ENCODE measurements at regions of chr11 and their contacts with region 1.

Region 1: DNA sequence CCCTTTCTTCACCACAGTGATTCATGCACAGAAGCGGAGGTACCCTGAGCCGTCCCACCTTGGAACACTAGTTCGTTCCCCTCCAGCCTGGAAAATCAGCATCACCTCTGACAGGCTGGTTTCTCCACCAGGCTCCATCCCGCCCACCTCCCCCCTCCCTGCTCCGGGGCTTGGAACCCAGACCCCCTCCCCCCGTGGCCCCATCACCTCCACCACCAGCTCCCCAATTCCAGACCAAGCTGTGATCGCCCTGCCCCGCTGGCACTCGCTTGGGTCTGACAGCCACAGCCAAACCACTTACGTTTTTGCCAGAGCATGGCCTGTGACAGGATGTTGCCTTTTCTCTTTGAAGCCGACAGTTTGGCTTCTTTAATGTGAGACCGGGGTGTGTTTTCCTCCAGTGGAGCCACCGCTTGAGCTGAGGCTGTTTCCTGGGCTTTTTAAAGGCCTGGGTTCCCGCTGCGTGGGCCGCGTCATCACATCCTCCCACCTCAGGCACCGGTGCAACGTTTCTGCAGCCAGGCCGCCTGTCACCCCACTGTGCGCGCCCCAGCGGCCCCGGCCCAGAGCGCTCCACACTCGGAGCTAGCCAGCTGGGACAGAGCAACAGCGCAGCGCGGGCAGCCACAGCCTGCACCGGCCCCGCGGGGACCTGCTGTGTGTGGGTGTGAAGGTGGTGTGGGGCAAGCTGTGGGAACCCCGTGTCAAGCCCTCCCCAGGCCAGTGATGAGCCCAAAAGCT is at the start of gene POU2AF1:
- DNase-seq: peak; percentile 69 to 79 (median 71)
- H3K4me3 ChIP-seq: peak within 1 kb of the TSS in 1 of 2 donors; percentile 46
- H3K4me3 Mint-ChIP-seq: peak within 1 kb of the TSS; percentile 77 to 91 (median 87)
- H3K27ac ChIP-seq: peak within 1 kb of the TSS; percentile 27
- H3K27ac Mint-ChIP-seq: peak within 1 kb of the TSS; percentile 86 to 99 (median 94)
- H3K4me1 ChIP-seq: peaks cover 24% of the 10 kb centered on the region
- H3K4me1 Mint-ChIP-seq: peaks cover 14 to 30% (median 24%) of the 10 kb centered on the region in 4 donors
- H3K27me3 ChIP-seq: no peaks in the 10 kb centered on the region
- H3K27me3 Mint-ChIP-seq: no peaks in the 10 kb centered on the region
- total RNA-seq, gene POU2AF1: 0.47 to 0.64 TPM

Region 2: DNA sequence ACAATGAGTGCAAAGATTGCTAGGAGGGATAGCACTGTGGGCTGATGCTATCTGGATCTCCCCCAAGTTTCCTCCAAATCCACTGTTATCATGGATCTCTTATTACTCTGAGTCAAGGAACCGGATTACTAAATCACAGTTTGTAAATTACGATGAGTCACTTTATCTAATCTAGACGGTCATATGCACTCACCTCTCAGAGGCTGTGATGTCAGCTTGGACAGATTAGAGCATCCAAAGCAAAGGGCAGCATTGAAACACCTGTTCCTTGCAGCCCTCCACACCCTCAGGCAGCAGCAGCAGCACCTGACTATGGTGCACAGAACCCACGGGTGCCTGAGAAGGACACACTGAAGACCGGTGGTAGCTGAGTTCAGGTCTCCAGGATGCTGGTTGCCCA is 14.1 kb after region 1 on chr11:
- CTCF ChIA-PET with region 1: no interaction called
- POLR2A ChIA-PET with region 1: interaction called, 4 read pairs
- intact Hi-C with region 1: loop called (anchors 2 kb)
- DNase-seq: no peak
- H3K4me3 ChIP-seq: no peak overlapping the region
- H3K4me3 Mint-ChIP-seq: no peak overlapping the region
- H3K27ac ChIP-seq: no peak overlapping the region
- H3K27ac Mint-ChIP-seq: no peak overlapping the region
- H3K4me1 ChIP-seq: no peaks in the 10 kb centered on the region
- H3K4me1 Mint-ChIP-seq: no peaks in the 10 kb centered on the region
- H3K27me3 ChIP-seq: no peaks in the 10 kb centered on the region
- H3K27me3 Mint-ChIP-seq: peaks cover 1 to 4% of the 10 kb centered on the region in 2 donors